ENCODE measurements at regions of chr15 and their contacts with region 1.

Region 1: DNA sequence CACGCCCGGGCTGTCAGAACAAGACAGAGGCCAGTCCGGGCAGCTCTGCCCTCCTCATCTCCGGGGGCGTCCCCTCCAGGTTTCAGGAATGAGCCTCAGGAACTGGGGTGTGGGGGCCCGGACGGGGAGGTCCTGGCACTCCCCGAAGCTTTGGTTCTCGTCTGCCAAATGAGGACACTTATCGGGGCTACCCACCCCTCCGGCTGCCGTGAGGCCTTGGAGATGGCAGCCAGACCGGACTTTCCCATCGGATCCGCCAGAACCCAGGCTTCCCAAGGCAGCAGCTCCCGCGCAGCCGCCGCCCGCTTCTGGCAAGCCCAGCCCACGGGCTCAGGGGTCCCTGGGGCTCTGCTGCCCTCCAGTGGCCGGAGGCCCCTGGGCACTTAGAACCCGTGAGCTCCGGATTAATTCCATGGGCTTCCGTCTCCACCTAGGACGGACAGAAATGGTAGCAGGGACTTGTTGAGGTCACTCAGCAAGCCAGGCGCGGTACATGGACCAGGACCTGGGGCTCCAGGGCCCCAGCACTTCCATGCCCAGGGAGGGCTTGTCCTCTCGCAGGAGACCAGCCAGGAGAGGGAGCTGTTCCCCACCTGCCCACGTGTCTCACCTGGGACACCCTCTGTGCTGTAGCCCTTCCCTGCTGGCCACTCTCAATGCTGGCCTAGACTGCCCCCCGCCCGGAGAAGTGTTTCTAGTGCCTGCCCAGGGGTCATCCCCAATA is 89.4 kb downstream of the LINGO1 start:
- DNase-seq: peak; percentile 95
- ATAC-seq: peak; percentile 90

Region 2: DNA sequence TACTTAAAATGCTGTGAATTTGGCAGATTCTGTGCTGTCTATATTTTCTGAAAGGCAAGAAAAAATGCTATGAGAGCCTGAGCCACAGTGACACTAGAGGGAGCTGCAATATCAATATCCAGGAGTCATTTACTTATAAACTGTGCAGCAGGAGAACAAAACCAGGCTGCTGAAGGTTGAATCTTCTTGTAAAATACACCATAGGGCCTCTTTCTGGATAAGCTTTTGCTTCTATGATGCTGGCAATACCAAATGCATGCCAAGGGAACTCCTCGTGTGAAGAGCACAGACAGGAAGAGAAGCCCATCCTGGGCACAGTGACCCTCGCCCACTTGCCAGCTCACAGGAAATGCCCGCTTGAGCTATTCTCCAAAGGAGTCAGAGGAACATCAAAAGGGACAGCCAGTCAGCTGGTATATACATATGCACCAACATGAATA is 424.4 kb before region 1 on chr15:
- intact Hi-C with region 1: loop called (anchors 2 kb)
- DNase-seq: no peak
- ATAC-seq: peak; percentile 80

Region 3: DNA sequence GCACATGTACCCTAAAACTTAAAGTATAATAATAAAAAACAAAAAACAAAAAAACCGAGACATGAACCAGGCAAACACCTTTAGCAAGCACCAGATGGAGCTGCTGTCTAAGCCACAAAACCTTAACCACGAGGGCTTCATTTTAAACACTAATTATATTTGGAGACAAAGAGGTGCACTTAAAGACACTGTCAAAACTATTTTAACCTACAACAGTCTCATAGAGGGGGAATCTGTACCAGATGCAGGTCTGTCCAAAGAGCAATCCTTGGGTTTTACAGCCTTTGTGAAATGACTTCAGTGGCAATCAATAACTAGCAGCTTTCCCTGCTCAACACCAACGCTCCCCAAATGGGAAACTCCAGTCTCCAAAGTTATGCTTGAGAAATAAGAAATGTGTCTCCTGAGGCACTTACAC is 356.7 kb before region 1 on chr15:
- intact Hi-C with region 1: loop called (anchors 5 kb)
- DNase-seq: no peak
- ATAC-seq: peak; percentile 45